Activated naive CD4-positive, alpha-beta T cell treated with anti-CD3 and anti-CD28 coated beads for 36 hours (primary cell): ENCODE measurements at regions of chr7 and their contacts with region 1.

Region 1: DNA sequence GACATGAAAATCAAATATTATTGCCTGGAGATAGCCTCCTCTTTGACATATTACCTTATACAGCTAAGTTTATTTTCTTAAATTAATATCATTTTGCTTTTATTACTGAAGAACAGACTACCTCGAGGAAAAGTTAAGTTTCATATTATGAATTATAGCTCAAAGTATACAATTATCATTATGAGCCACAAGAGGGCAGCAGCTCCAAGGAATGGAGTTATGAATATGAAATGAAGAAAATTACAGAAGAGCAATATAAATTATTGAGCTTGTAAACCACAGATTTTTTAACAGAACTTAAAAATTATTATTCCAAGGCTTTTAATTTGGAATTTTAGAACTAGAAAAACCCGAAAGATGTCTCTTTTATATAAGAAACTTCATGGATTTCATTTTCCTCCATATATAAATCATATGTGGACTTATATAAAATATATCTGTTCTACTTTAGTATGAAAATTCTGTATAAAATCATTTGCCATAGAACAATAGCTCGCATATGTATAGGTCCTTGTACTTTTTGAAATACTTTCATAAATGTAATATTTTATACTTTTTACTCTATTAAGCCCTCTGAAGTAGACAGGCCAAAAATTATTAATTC is 40.1 kb downstream of the IQUB start:
- DNase-seq: peak; percentile 42
- H3K4me3 Mint-ChIP-seq: no peak overlapping the region
- H3K27ac Mint-ChIP-seq: no peak overlapping the region
- H3K4me1 Mint-ChIP-seq: no peaks in the 10 kb centered on the region
- H3K27me3 Mint-ChIP-seq: peaks cover 7% of the 10 kb centered on the region

Region 2: GRCh38 chr7:123624527-123625183 is 130.4 kb after region 1 on chr7:
- CTCF ChIA-PET with region 1: interaction called, 7 read pairs
- intact Hi-C with region 1: loop called (anchors 1 kb)
- DNase-seq: peak; percentile 79
- H3K4me3 Mint-ChIP-seq: no peak overlapping the region
- H3K27ac Mint-ChIP-seq: no peak overlapping the region
- H3K4me1 Mint-ChIP-seq: no peaks in the 10 kb centered on the region
- H3K27me3 Mint-ChIP-seq: no peaks in the 10 kb centered on the region

Region 3: GRCh38 chr7:123682690-123683089 is 188.4 kb after region 1 on chr7:
- CTCF ChIA-PET with region 1: interaction called, 3 read pairs
- intact Hi-C with region 1: loop called (anchors 1 kb)
- DNase-seq: peak; percentile 31
- H3K4me3 Mint-ChIP-seq: no peak overlapping the region
- H3K27ac Mint-ChIP-seq: no peak overlapping the region
- H3K4me1 Mint-ChIP-seq: no peaks in the 10 kb centered on the region
- H3K27me3 Mint-ChIP-seq: no peaks in the 10 kb centered on the region

Region 4: GRCh38 chr7:123865517-123866117 is 371.3 kb after region 1 on chr7:
- CTCF ChIA-PET with region 1: interaction called, 4 read pairs
- intact Hi-C with region 1: loop called (anchors 1 kb)
- DNase-seq: peak; percentile 66
- H3K4me3 Mint-ChIP-seq: no peak overlapping the region
- H3K27ac Mint-ChIP-seq: no peak overlapping the region
- H3K4me1 Mint-ChIP-seq: no peaks in the 10 kb centered on the region
- H3K27me3 Mint-ChIP-seq: peaks cover 3% of the 10 kb centered on the region